ENCODE measurements at regions of chr20 and their contacts with region 1.

Region 1: GRCh38 chr20:59159493-59160376 is 3.9 kb upstream of the ZNF831 start:
- DNase-seq: peak; percentile 22
- H3K4me3 ChIP-seq: no peak overlapping the region
- H3K27ac ChIP-seq: no peak overlapping the region
- H3K4me1 ChIP-seq: peaks cover 44% of the 10 kb centered on the region
- CTCF ChIP-seq: no peak

Region 2: DNA sequence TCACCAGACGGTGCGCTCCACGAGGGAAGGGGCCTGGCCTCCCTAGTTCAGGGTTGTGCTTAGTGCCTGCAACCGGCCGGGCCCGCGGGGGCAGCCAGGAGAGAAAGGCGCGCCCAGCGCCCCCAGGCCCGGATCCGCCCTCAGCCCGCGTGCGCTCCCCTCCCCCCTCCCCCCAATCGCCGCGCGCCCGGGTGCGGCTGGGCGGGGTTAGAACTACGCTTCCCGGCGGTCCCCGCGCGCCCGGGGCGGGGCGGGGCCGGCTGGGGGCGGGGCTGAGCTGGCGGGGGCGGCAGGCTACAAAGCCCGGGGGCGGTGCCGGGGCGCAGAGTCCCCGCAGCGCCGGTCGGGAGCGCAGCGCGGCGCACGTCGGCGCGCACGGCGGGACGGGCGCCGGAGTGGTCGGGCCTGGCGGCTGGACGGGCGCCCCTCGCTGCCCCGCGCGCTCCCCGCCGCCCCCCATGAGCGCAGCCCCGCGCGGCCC is 1768.6 kb before region 1 on chr20 and contains the start of gene RBM38:
- CTCF ChIA-PET with region 1: no interaction called
- POLR2A ChIA-PET with region 1: no interaction called
- intact Hi-C with region 1: loop called (anchors 10 kb)
- DNase-seq: peak; percentile 87
- H3K4me3 ChIP-seq: peak within 1 kb of the TSS; percentile 99
- H3K27ac ChIP-seq: peak within 1 kb of the TSS; percentile 97
- H3K4me1 ChIP-seq: peaks cover 61% of the 10 kb centered on the region
- CTCF ChIP-seq: no peak
- total RNA-seq, gene RBM38: 136 and 174 TPM in 2 replicates

Region 3: GRCh38 chr20:59120491-59120890 is 39.2 kb before region 1 on chr20:
- CTCF ChIA-PET with region 1: interaction called, 6 read pairs
- POLR2A ChIA-PET with region 1: interaction called, 49 read pairs
- intact Hi-C with region 1: no loop called
- DNase-seq: peak; percentile 55
- H3K4me3 ChIP-seq: no peak overlapping the region
- H3K27ac ChIP-seq: no peak overlapping the region
- H3K4me1 ChIP-seq: peaks cover 66% of the 10 kb centered on the region
- CTCF ChIP-seq: no peak

Region 4: GRCh38 chr20:59177261-59178250 is 17.8 kb after region 1 on chr20:
- CTCF ChIA-PET with region 1: interaction called, 5 read pairs
- POLR2A ChIA-PET with region 1: interaction called, 10 read pairs
- intact Hi-C with region 1: no loop called
- DNase-seq: no peak
- H3K4me3 ChIP-seq: no peak overlapping the region
- H3K27ac ChIP-seq: no peak overlapping the region
- H3K4me1 ChIP-seq: peaks cover 17% of the 10 kb centered on the region
- CTCF ChIP-seq: no peak

Measured in OCI-LY7 (cell line).